Activated naive CD4-positive, alpha-beta T cell treated with anti-CD3 and anti-CD28 coated beads, Interleukin-2, amount 10 ng/mL, durations not matched to agents 7 days and 5 days (primary cell): ENCODE measurements at regions of chr21 and their contacts with region 1.

Region 1: GRCh38 chr21:39518138-39518846 is 66.5 kb downstream of the SH3BGR start:
- DNase-seq: peak; percentile 52
- H3K4me3 Mint-ChIP-seq: no peak overlapping the region
- H3K27ac Mint-ChIP-seq: no peak overlapping the region
- H3K4me1 Mint-ChIP-seq: no peaks in the 10 kb centered on the region
- H3K27me3 Mint-ChIP-seq: peaks cover 8% of the 10 kb centered on the region

Region 2: GRCh38 chr21:39715804-39716397 is 197.6 kb after region 1 on chr21:
- CTCF ChIA-PET with region 1: interaction called, 24 read pairs
- DNase-seq: peak; percentile 55
- H3K4me3 Mint-ChIP-seq: no peak overlapping the region
- H3K27ac Mint-ChIP-seq: no peak overlapping the region
- H3K4me1 Mint-ChIP-seq: no peaks in the 10 kb centered on the region
- H3K27me3 Mint-ChIP-seq: no peaks in the 10 kb centered on the region